ENCODE measurements at regions of chr5 and their contacts with region 1.

Region 1: GRCh38 chr5:174724491-174725260 is at the start of gene MSX2:
- DNase-seq: peak; percentile 95
- H3K4me3 Mint-ChIP-seq: peak within 1 kb of the TSS; percentile 81
- H3K27ac Mint-ChIP-seq: peak within 1 kb of the TSS; percentile 81
- H3K4me1 Mint-ChIP-seq: peaks cover 31% of the 10 kb centered on the region
- H3K27me3 Mint-ChIP-seq: peaks cover 43% of the 10 kb centered on the region
- CTCF ChIP-seq: no peak
- total RNA-seq, gene MSX2: 8.4 and 10.4 TPM in 2 replicates

Region 2: DNA sequence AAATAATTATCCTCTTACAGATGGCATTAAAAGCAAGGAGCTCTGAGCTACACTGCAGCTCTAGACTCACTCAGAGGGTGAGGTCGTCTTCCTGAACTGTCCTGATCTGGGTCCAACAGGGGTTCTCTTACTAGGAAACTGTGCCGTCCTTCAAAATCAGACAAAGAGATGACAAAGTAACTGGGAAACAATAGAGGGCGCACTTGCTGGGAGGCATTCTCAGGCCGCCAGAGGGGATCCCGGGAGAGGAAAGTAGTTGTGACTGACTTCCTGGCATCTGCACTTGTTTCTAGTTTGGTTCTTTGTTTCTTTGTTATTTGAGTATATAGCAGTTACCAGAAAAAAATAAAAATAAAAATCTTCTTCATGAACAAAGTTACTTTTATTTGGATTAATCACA is 143.2 kb before region 1 on chr5:
- CTCF ChIA-PET with region 1: interaction called, 4 read pairs
- intact Hi-C with region 1: loop called (anchors 2 kb)
- DNase-seq: peak; percentile 69
- H3K4me3 Mint-ChIP-seq: no peak overlapping the region
- H3K27ac Mint-ChIP-seq: no peak overlapping the region
- H3K4me1 Mint-ChIP-seq: peaks cover 8% of the 10 kb centered on the region
- H3K27me3 Mint-ChIP-seq: no peaks in the 10 kb centered on the region
- CTCF ChIP-seq: peak; percentile 35

Region 3: GRCh38 chr5:174599992-174600391 is 124.7 kb before region 1 on chr5:
- CTCF ChIA-PET with region 1: no interaction called
- intact Hi-C with region 1: loop called (anchors 5 kb)
- DNase-seq: peak; percentile 55
- H3K4me3 Mint-ChIP-seq: peak overlapping the region; percentile 61
- H3K27ac Mint-ChIP-seq: peak overlapping the region; percentile 91
- H3K4me1 Mint-ChIP-seq: peaks cover 43% of the 10 kb centered on the region
- H3K27me3 Mint-ChIP-seq: no peaks in the 10 kb centered on the region
- CTCF ChIP-seq: no peak

Region 4: GRCh38 chr5:174872271-174872670 is 147.6 kb after region 1 on chr5:
- CTCF ChIA-PET with region 1: no interaction called
- intact Hi-C with region 1: no loop called
- DNase-seq: no peak
- H3K4me3 Mint-ChIP-seq: no peak overlapping the region
- H3K27ac Mint-ChIP-seq: no peak overlapping the region
- H3K4me1 Mint-ChIP-seq: no peaks in the 10 kb centered on the region
- H3K27me3 Mint-ChIP-seq: peaks cover 43% of the 10 kb centered on the region
- CTCF ChIP-seq: no peak

Measured in Calu3 (cell line).